Heart right ventricle (tissue), 16 donors: ENCODE measurements at regions of chr15 and their contacts with region 1.

Region 1: GRCh38 chr15:74540761-74541493 is at the start of gene ARID3B:
- DNase-seq: peak; percentile 97 to 98
- ATAC-seq: peak; percentile 98 to 100 (median 99)
- H3K4me3 ChIP-seq: peak within 1 kb of the TSS; percentile 80 to 97 (median 92)
- H3K27ac ChIP-seq: peak within 1 kb of the TSS in 9 of 10 donors; percentile 60 to 93 (median 79)
- H3K4me1 ChIP-seq: peaks cover 7 to 49% (median 29%) of the 10 kb centered on the region in 9 donors
- H3K27me3 ChIP-seq: no peaks in the 10 kb centered on the region
- CTCF ChIP-seq: no peak
- total RNA-seq, gene ARID3B: 1.2 to 3.7 (median 2.4) TPM

Region 2: GRCh38 chr15:74460871-74461846 is 79.8 kb before region 1 on chr15 and contains the start of gene UBL7:
- intact Hi-C with region 1: loop called in 6 of 10 experiments (anchors 2 to 10 kb)
- DNase-seq: peak; percentile 95 to 98
- ATAC-seq: peak; percentile 99 to 100 (median 99)
- H3K4me3 ChIP-seq: peak within 1 kb of the TSS; percentile 48 to 95 (median 72)
- H3K27ac ChIP-seq: peak within 1 kb of the TSS; percentile 54 to 92 (median 86)
- H3K4me1 ChIP-seq: peaks cover 0 to 25% (median 18%) of the 10 kb centered on the region in 9 donors
- H3K27me3 ChIP-seq: no peaks in the 10 kb centered on the region
- CTCF ChIP-seq: peak in 5 of 9 donors; percentile 14 to 48 (median 45)
- total RNA-seq, gene UBL7: 49.1 to 56.6 (median 52.7) TPM

Region 3: DNA sequence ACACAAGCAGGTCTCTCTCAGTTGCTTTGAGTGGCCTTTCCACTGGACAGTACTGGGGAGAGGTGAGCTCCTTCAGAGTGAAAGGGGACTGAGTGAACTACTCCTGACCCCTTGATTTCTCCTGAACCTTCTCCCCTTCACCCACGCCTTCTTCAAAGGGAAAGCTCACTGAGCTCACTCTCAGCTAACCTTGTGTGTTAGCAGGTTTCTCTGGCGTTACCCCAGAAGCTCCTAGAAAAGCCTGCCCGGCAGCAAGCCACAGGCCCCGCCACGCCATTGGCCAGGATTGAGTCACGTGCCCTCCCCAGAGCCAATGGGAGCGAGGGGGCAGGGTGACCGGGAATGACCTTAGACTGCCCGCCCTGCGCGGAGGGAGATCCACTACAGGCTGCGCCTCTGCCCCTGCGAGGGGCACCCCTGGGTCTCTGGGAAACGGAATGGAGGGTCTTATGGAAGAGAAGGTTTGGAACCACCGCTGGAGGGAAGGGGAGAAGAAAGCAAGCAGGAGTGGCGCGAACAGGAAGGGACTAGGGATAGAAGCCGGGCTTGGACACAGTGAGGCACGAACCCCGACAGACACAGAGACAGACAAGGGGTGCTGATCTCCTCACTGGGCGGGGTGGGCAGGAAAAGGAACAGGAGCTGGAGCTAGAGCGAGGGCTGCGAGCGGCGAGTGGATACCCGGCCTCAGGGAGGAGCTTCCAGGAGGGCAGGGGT is 57.4 kb after region 1 on chr15:
- intact Hi-C with region 1: loop called in 4 of 10 experiments (anchors 5 kb)
- DNase-seq: peak; percentile 95 to 96
- ATAC-seq: peak; percentile 96 to 99 (median 98)
- H3K4me3 ChIP-seq: peak overlapping the region; percentile 58 to 81 (median 65)
- H3K27ac ChIP-seq: peak overlapping the region; percentile 73 to 95 (median 90)
- H3K4me1 ChIP-seq: peaks cover 8 to 34% (median 16%) of the 10 kb centered on the region in 9 donors
- H3K27me3 ChIP-seq: no peaks in the 10 kb centered on the region
- CTCF ChIP-seq: no peak

Region 4: DNA sequence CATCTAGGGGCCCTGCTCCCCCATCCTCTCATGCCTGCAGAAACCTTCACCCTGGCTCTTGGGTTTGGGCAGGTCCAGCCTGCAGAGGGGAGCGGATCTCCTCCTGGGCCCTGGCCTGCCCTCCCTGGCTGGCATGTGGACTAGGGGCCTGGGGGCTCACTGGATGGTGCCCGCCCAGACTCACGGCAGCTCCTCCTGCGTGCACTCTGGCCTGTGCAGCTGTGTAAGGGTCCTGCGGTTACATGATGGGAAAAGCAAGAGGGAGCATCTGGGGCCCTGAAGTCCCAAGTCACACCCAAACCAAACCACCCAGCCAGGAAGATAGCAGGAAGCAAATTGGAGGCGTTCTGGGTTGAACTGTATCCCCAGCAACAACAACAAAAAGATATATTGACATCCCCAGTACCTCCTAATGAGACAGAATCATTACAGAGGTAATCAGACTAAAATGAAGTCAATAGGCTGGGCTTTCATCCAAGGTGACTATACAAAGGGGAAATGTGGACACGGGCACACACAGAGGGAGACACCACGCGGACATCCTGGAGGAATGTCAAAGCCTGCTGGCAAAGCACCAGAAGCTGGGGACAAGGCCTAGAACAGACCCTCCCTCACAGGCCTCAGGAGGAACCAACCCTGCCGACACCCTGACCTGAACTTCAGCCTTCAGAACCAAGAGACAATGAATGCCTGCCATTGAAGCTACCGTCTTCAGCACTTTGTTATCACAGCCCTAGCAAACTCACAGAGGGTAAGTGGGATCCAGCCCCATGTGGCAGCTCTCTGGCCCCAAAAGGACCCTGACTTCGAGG is 64.3 kb after region 1 on chr15:
- intact Hi-C with region 1: loop called in 3 of 10 experiments (anchors 5 kb)
- DNase-seq: no peak
- ATAC-seq: no peak
- H3K4me3 ChIP-seq: no peak overlapping the region
- H3K27ac ChIP-seq: no peak overlapping the region
- H3K4me1 ChIP-seq: peaks cover 0 to 29% (median 12%) of the 10 kb centered on the region in 9 donors
- H3K27me3 ChIP-seq: no peaks in the 10 kb centered on the region
- CTCF ChIP-seq: no peak